Activated CD4-positive, alpha-beta T cell treated with anti-CD3 and anti-CD28 coated beads for 36 hours (primary cell): ENCODE measurements at regions of chr6 and their contacts with region 1.

Region 1: GRCh38 chr6:33147807-33148666 is 44.2 kb downstream of the COL11A2 start:
- DNase-seq: no peak
- ATAC-seq: no peak
- H3K4me3 Mint-ChIP-seq: no peak overlapping the region
- H3K27ac Mint-ChIP-seq: no peak overlapping the region
- H3K4me1 Mint-ChIP-seq: no peaks in the 10 kb centered on the region
- H3K27me3 Mint-ChIP-seq: peaks cover 23% of the 10 kb centered on the region

Region 2: DNA sequence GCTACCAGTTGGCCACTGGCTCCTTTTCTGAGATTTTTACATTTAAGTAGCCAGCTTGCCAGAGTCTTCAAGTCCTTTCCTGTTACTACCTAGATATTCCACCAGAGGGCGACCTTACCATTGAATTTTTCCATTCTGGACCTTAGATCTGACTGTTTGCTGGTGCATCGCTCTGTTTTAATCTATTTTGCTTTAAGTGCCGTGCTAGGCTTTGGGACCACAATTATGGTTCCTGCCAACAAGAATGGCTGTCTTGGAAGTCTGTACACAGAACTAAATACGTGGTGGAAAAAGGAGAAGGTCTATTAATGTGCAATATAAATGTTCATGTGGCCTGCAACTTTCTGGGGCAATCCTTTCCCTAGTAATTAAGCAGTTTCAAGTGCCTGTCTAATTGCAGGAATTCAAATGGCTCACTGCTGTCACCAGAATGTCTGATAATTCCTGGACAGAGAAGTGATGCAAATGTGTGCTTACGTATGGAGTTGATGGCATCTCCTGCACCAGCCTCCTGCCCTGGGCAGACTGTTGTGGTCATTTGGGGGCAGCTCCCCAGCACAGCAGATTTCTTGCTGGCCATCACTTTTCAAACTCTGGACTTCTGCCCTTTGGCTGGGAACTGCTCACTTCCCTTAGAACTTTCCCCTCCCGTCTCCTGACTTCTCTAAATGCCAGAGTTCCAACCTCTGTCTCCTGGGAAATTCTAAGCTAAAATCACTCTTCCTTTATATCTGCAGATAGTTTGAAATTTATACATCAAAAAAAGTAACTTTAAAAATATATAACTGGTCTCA is 133.0 kb before region 1 on chr6:
- CTCF ChIA-PET with region 1: interaction called, 9 read pairs
- POLR2A ChIA-PET with region 1: no interaction called
- intact Hi-C with region 1: loop called in 1 of 2 experiments (anchors 1 kb)
- DNase-seq: peak; percentile 53
- ATAC-seq: peak; percentile 81
- H3K4me3 Mint-ChIP-seq: no peak overlapping the region
- H3K27ac Mint-ChIP-seq: no peak overlapping the region
- H3K4me1 Mint-ChIP-seq: peaks cover 23% of the 10 kb centered on the region
- H3K27me3 Mint-ChIP-seq: no peaks in the 10 kb centered on the region

Region 3: GRCh38 chr6:33118525-33119123 is 29.4 kb before region 1 on chr6:
- CTCF ChIA-PET with region 1: interaction called, 16 read pairs
- POLR2A ChIA-PET with region 1: no interaction called
- intact Hi-C with region 1: loop called in 1 of 2 experiments (anchors 1 kb)
- DNase-seq: no peak
- ATAC-seq: peak; percentile 55
- H3K4me3 Mint-ChIP-seq: no peak overlapping the region
- H3K27ac Mint-ChIP-seq: no peak overlapping the region
- H3K4me1 Mint-ChIP-seq: peaks cover 7% of the 10 kb centered on the region
- H3K27me3 Mint-ChIP-seq: peaks cover 31% of the 10 kb centered on the region

Region 4: DNA sequence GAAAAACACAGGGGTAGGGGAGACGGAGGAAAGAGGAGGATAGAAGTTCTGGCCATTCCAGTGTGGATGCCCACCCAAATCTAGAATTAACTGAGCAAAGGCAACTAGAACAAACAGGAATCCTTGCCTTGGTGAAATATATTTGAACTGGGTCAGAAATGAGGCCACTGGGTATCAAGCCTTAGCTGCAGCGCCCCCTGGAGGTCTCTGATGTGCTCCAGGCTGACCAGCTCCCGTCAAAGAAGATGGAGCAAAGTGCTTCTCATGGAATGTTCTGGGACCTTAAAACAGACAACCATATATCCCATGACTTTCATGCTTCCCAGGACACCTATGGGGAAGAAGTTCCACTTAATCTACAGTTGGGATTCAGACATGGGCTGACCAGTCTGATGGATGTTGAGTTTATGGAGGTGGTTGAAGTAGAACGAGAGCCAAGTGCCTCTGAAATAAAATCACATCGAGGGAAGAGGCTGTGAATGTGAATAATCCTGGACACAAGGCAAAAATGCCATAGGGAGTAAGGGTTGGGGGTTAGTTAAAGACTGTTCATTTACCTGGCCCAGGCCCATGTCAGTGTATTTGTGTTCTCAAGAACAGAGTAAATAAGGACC is 21.8 kb before region 1 on chr6:
- CTCF ChIA-PET with region 1: interaction called, 14 read pairs
- POLR2A ChIA-PET with region 1: no interaction called
- intact Hi-C with region 1: loop called in 1 of 2 experiments (anchors 1 kb)
- DNase-seq: peak; percentile 83
- ATAC-seq: peak; percentile 42
- H3K4me3 Mint-ChIP-seq: no peak overlapping the region
- H3K27ac Mint-ChIP-seq: no peak overlapping the region
- H3K4me1 Mint-ChIP-seq: no peaks in the 10 kb centered on the region
- H3K27me3 Mint-ChIP-seq: peaks cover 7% of the 10 kb centered on the region

Region 5: GRCh38 chr6:33161354-33162331 is 13.6 kb after region 1 on chr6:
- CTCF ChIA-PET with region 1: interaction called, 17 read pairs
- POLR2A ChIA-PET with region 1: no interaction called
- intact Hi-C with region 1: no loop called
- DNase-seq: peak; percentile 90
- ATAC-seq: peak; percentile 95
- H3K4me3 Mint-ChIP-seq: peak overlapping the region; percentile 71
- H3K27ac Mint-ChIP-seq: peak overlapping the region; percentile 43
- H3K4me1 Mint-ChIP-seq: peaks cover 10% of the 10 kb centered on the region
- H3K27me3 Mint-ChIP-seq: peaks cover 4% of the 10 kb centered on the region

Region 6: GRCh38 chr6:33299237-33299944 is 151.4 kb after region 1 on chr6:
- CTCF ChIA-PET with region 1: no interaction called
- POLR2A ChIA-PET with region 1: no interaction called
- intact Hi-C with region 1: no loop called
- DNase-seq: peak; percentile 97
- ATAC-seq: peak; percentile 87
- H3K4me3 Mint-ChIP-seq: peak overlapping the region; percentile 80
- H3K27ac Mint-ChIP-seq: peak overlapping the region; percentile 98
- H3K4me1 Mint-ChIP-seq: peaks cover 28% of the 10 kb centered on the region
- H3K27me3 Mint-ChIP-seq: no peaks in the 10 kb centered on the region